PC-3 (cell line): ENCODE measurements at regions of chr14 and their contacts with region 1.

Region 1: DNA sequence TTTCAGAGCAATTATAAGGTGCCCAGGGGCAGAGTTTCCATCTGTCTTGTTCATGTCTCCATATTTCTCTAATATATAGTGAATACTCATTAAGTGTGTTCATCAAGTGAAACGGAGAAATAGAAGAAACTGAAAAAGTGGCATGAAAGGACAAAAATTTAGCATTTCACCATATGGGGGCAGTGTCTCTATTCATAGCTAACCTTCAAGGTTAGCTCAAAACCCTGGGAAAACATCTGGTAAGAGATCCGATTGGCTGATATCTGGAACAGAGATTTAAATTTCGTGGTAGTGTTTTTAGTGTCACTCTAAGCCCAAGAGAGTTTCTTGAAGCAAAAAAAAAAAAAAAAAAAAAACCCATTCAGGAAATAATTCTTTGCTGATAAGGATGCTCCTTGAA is 367.5 kb downstream of the DAD1 start:
- DNase-seq: peak; percentile 72
- ATAC-seq: no peak
- H3K4me3 ChIP-seq: no peak overlapping the region
- H3K27ac ChIP-seq: no peak overlapping the region
- H3K4me1 ChIP-seq: peaks cover 13% of the 10 kb centered on the region
- H3K27me3 ChIP-seq: no peaks in the 10 kb centered on the region
- CTCF ChIP-seq: peak; percentile 79

Region 2: DNA sequence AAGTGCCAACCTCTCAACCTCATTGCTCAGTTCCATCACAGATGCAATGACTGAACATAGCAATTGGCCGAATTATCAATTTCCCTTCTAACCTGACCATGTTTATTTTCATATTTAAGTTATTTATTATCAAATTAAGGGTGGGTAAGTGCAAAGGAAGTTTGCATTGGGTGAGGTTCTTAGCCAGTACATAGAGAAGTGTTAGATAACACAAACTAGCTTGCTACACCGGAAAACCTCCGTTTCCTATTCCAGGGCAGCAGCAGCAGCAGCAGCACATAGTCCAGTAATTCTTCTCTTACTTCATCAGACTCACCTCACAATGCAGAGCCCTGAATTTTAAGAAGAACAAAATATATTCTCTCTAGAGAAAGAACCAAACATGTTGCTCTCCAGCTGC is 347.3 kb before region 1 on chr14:
- CTCF ChIA-PET with region 1: no interaction called
- POLR2A ChIA-PET with region 1: no interaction called
- intact Hi-C with region 1: no loop called
- DNase-seq: no peak
- ATAC-seq: no peak
- H3K4me3 ChIP-seq: no peak overlapping the region
- H3K27ac ChIP-seq: no peak overlapping the region
- H3K4me1 ChIP-seq: no peaks in the 10 kb centered on the region
- H3K27me3 ChIP-seq: peaks cover 56% of the 10 kb centered on the region
- CTCF ChIP-seq: no peak

Region 3: GRCh38 chr14:22131749-22132476 is 89.6 kb before region 1 on chr14:
- CTCF ChIA-PET with region 1: no interaction called
- POLR2A ChIA-PET with region 1: no interaction called
- intact Hi-C with region 1: no loop called
- DNase-seq: peak; percentile 37
- ATAC-seq: no peak
- H3K4me3 ChIP-seq: no peak overlapping the region
- H3K27ac ChIP-seq: no peak overlapping the region
- H3K4me1 ChIP-seq: no peaks in the 10 kb centered on the region
- H3K27me3 ChIP-seq: peaks cover 15% of the 10 kb centered on the region
- CTCF ChIP-seq: peak; percentile 69

Region 4: GRCh38 chr14:22200977-22201605 is 20.4 kb before region 1 on chr14:
- CTCF ChIA-PET with region 1: interaction called, 19 read pairs
- POLR2A ChIA-PET with region 1: no interaction called
- intact Hi-C with region 1: no loop called
- DNase-seq: peak; percentile 81
- ATAC-seq: peak; percentile 97
- H3K4me3 ChIP-seq: no peak overlapping the region
- H3K27ac ChIP-seq: no peak overlapping the region
- H3K4me1 ChIP-seq: no peaks in the 10 kb centered on the region
- H3K27me3 ChIP-seq: no peaks in the 10 kb centered on the region
- CTCF ChIP-seq: peak; percentile 93

Region 5: DNA sequence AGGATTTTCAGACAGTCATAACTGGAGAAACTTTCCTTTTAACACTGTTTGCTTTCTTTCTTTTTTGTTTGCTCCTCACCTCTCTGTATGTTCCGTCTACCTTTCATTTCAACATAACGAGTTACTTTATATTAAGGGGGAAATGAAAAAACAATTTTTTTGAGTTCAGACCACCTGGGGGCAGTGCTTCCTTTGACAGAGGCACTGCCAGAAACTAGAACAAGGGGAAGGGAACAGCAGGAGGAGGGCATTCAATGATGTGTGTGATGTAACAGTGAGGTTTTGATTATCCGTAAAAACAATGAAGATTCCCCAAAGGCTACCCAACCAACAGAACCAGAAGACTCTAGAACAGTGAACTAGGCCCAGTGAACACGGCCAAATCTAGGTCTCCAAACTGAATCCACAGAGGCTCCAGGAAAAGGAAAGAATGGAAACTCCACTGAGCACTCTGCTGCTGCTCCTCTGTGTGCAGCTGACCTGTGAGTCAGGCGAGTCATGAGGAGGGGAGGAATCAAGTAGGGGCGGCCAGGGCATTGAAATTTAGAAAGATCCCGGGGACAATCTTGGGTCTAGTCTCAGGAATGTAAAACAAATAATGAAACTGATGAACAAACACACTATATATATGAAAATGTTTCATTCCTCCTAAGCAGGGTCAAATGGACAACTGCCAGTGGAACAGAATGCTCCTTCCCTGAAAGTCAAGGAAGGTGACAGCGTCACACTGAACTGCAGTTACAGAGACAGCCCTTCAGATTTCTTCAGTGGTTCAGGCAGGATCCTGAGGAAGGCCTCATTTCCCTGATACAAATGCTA is 44.0 kb after region 1 on chr14:
- CTCF ChIA-PET with region 1: interaction called, 19 read pairs
- POLR2A ChIA-PET with region 1: interaction called, 27 read pairs
- intact Hi-C with region 1: loop called (anchors 2 kb)
- DNase-seq: peak; percentile 56
- ATAC-seq: peak; percentile 57
- H3K4me3 ChIP-seq: peak overlapping the region; percentile 19; the same call in 1 of the 2 replicates
- H3K27ac ChIP-seq: peak overlapping the region; percentile 76
- H3K4me1 ChIP-seq: peaks cover 74% of the 10 kb centered on the region
- H3K27me3 ChIP-seq: no peaks in the 10 kb centered on the region
- CTCF ChIP-seq: peak; percentile 68

Region 6: GRCh38 chr14:22303589-22304195 is 82.2 kb after region 1 on chr14:
- CTCF ChIA-PET with region 1: no interaction called
- POLR2A ChIA-PET with region 1: no interaction called
- intact Hi-C with region 1: loop called (anchors 2 kb)
- DNase-seq: peak; percentile 63
- ATAC-seq: peak; percentile 35
- H3K4me3 ChIP-seq: no peak overlapping the region
- H3K27ac ChIP-seq: no peak overlapping the region
- H3K4me1 ChIP-seq: peaks cover under 1% of the 10 kb centered on the region; the same call in 1 of the 2 replicates
- H3K27me3 ChIP-seq: no peaks in the 10 kb centered on the region
- CTCF ChIP-seq: peak; percentile 65; the same call in 1 of the 2 replicates

Region 7: GRCh38 chr14:22319526-22320361 is 98.2 kb after region 1 on chr14:
- CTCF ChIA-PET with region 1: interaction called, 8 read pairs
- POLR2A ChIA-PET with region 1: no interaction called
- intact Hi-C with region 1: loop called (anchors 1 kb)
- DNase-seq: peak; percentile 89
- ATAC-seq: peak; percentile 78
- H3K4me3 ChIP-seq: no peak overlapping the region
- H3K27ac ChIP-seq: no peak overlapping the region
- H3K4me1 ChIP-seq: peaks cover 24% of the 10 kb centered on the region
- H3K27me3 ChIP-seq: no peaks in the 10 kb centered on the region
- CTCF ChIP-seq: peak; percentile 81

Region 8: GRCh38 chr14:22380571-22381407 is 159.3 kb after region 1 on chr14:
- CTCF ChIA-PET with region 1: interaction called, 17 read pairs
- POLR2A ChIA-PET with region 1: interaction called, 25 read pairs
- intact Hi-C with region 1: loop called (anchors 1 kb)
- DNase-seq: peak; percentile 72
- ATAC-seq: peak; percentile 96
- H3K4me3 ChIP-seq: peak overlapping the region; percentile 49; the same call in 1 of the 2 replicates
- H3K27ac ChIP-seq: peak overlapping the region; percentile 23; the same call in 1 of the 2 replicates
- H3K4me1 ChIP-seq: peaks cover 25% of the 10 kb centered on the region
- H3K27me3 ChIP-seq: no peaks in the 10 kb centered on the region
- CTCF ChIP-seq: no peak

Region 9: DNA sequence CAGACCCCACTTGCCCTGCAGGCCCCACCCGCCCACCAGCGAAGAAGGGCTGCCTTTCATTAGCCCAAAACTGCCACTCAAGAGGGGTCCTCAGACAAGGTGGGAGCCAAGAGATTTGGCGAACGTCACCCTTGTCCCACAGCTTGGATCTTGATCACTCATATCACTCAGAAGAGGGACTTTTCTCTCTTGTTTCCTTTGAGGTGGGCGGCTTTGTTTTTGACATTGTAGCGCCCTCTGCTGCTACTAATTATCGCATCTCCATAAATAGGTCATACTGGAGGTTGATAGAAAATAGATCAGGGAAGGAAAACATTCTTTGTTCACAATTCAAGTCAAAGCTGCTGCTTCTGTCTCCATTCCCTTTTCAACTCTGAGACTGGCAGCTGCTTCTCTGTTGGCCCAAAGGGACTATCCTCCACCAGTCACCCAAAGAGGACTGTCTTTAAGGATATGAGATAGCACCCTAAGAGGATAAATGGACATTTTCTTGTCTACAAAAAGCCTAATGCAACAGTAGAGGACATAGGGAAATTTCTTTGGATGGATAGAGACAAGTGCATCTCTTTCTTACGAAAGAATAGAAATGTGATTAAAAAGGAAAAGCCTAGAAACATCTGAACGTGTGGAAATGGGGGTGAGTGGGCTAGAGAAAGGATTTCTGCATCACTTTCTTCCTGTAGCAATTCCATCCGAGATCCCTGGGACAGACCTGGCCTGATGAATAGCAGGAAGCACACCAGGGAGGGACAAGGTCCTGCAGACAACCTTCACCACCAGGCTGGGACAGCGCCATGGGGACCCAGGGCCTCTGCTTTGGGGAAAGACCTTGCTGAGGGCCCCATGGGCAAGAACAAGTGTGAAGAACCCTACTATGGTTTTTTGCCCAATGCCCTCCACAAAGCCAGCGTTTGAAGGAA is 251.7 kb after region 1 on chr14:
- CTCF ChIA-PET with region 1: interaction called, 26 read pairs
- POLR2A ChIA-PET with region 1: interaction called, 4 read pairs
- intact Hi-C with region 1: loop called (anchors 2 kb)
- DNase-seq: peak; percentile 72
- ATAC-seq: peak; percentile 54
- H3K4me3 ChIP-seq: no peak overlapping the region
- H3K27ac ChIP-seq: no peak overlapping the region
- H3K4me1 ChIP-seq: peaks cover 23% of the 10 kb centered on the region
- H3K27me3 ChIP-seq: no peaks in the 10 kb centered on the region
- CTCF ChIP-seq: peak; percentile 84